ENCODE measurements at regions of chr12 and their contacts with region 1.

Region 1: GRCh38 chr12:85866986-85867776 is 6.9 kb upstream of the NTS start:
- DNase-seq: peak; percentile 81
- H3K4me3 ChIP-seq: no peak overlapping the region
- H3K27ac ChIP-seq: no peak overlapping the region
- H3K4me1 ChIP-seq: no peaks in the 10 kb centered on the region
- H3K27me3 ChIP-seq: no peaks in the 10 kb centered on the region
- CTCF ChIP-seq: peak; percentile 57 to 60
- POLR2A ChIP-seq: no peak

Region 2: DNA sequence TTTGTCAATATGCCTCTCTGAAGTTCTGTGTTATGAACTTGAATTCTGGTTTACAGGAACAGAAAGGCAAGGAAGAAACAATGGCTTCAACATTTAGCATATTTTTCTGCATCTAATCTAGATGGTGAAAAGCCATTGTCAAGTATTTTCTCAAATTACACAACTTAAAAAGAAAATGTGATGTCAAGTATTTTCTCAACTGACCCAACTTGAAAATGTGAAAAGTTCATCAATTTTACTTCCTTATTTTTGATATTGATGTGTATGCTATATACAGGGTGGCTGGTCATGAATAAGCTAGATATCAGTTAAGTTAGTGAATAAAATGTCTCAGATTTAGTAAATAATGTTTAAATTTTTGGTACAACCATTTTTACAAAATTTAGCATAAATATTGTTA is 390.4 kb before region 1 on chr12:
- CTCF ChIA-PET with region 1: interaction called, 57 read pairs
- POLR2A ChIA-PET with region 1: no interaction called
- dilution Hi-C with region 1: no loop called
- intact Hi-C with region 1: loop called (anchors 1 kb)
- DNase-seq: no peak
- H3K4me3 ChIP-seq: no peak overlapping the region
- H3K27ac ChIP-seq: no peak overlapping the region
- H3K4me1 ChIP-seq: no peaks in the 10 kb centered on the region
- H3K27me3 ChIP-seq: no peaks in the 10 kb centered on the region
- CTCF ChIP-seq: no peak
- POLR2A ChIP-seq: no peak

Region 3: DNA sequence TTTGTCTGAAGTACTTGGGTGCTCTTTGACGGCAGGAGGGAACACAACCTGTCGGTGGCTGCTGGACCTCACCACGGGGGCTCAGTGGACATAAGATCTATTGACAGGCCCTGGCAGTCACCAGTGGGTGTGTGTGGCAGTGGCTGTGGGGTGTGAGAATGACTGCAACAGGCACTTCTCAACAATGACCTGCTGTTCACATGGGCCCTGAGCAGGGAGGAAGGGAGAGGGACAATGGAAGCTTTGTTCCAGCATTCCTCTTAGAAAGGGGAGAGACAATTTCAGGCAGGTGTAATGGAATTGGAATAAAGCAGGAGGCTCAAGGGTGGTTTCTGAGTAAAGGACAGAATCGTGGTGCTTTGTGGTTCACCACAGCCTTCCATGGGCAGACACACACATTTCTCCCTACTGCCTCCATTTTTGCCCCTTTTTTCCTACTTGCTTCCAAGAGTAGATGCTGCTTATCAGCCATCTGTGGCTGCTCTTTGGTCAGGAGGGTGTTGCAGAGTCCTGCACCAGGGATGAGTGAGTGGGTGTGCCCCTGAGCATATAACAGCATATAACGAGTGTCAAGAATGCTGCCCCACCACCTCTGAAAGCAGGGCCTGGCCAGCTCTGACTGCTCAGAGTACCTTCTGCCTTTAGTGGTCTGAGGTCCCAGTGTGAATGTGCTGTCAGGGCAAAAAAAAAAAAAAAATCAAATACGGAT is 298.6 kb before region 1 on chr12:
- CTCF ChIA-PET with region 1: interaction called, 26 read pairs
- POLR2A ChIA-PET with region 1: no interaction called
- dilution Hi-C with region 1: no loop called
- intact Hi-C with region 1: no loop called
- DNase-seq: no peak
- H3K4me3 ChIP-seq: no peak overlapping the region
- H3K27ac ChIP-seq: no peak overlapping the region
- H3K4me1 ChIP-seq: no peaks in the 10 kb centered on the region
- H3K27me3 ChIP-seq: no peaks in the 10 kb centered on the region
- CTCF ChIP-seq: no peak
- POLR2A ChIP-seq: no peak

Region 4: DNA sequence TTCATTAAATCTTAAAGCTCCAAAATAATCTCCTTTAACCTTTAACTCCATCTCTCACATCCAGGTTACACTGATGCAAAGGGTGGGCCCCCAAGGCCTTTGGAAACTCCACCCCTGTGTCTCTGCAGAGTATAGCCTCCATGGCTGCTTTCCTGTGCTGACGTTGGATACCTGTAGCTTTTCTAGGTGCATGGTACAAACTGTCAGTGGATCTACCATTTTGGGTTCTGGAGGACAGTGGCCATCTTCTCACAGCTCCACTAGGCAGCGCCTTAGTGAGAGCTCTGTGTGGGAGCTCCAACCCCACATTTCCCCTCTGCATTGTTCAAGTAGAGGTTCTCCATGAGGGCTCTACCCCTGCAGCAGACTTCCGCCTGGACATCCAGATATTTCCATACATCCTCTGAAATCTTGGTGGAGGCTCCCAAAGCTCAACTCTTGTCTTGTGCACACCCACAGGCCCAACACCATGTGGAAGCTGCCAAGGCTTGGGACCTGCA is 193.2 kb before region 1 on chr12:
- CTCF ChIA-PET with region 1: no interaction called
- POLR2A ChIA-PET with region 1: no interaction called
- dilution Hi-C with region 1: no loop called
- intact Hi-C with region 1: no loop called
- DNase-seq: no peak
- H3K4me3 ChIP-seq: no peak overlapping the region
- H3K27ac ChIP-seq: no peak overlapping the region
- H3K4me1 ChIP-seq: no peaks in the 10 kb centered on the region
- H3K27me3 ChIP-seq: no peaks in the 10 kb centered on the region
- CTCF ChIP-seq: no peak
- POLR2A ChIP-seq: no peak

Region 5: GRCh38 chr12:85733221-85733840 is 133.8 kb before region 1 on chr12:
- CTCF ChIA-PET with region 1: interaction called, 10 read pairs
- POLR2A ChIA-PET with region 1: no interaction called
- dilution Hi-C with region 1: no loop called
- intact Hi-C with region 1: no loop called
- DNase-seq: peak; percentile 84
- H3K4me3 ChIP-seq: no peak overlapping the region
- H3K27ac ChIP-seq: no peak overlapping the region
- H3K4me1 ChIP-seq: no peaks in the 10 kb centered on the region
- H3K27me3 ChIP-seq: no peaks in the 10 kb centered on the region
- CTCF ChIP-seq: no peak
- POLR2A ChIP-seq: no peak

Region 6: DNA sequence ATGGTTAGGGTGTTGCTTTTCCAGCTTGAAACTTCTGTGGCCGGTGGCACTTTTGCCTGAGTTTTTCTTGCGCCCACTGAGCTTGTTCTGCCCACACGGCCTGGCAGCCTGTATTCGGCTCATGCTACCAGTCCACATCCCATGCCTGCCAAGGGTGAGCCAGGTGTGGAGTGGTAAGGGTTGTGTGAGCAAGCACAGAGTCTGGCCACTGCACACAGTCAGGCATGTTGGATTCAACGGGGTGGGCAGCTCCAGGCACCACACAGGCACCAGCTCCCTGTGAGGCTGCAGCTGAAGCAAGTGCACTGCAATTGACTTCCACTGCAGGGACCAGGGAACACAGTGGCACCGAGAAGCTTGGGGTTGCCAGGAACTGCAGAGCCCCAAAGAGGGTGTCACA is 11.9 kb before region 1 on chr12:
- CTCF ChIA-PET with region 1: interaction called, 31 read pairs
- POLR2A ChIA-PET with region 1: no interaction called
- dilution Hi-C with region 1: no loop called
- intact Hi-C with region 1: no loop called
- DNase-seq: no peak
- H3K4me3 ChIP-seq: no peak overlapping the region
- H3K27ac ChIP-seq: no peak overlapping the region
- H3K4me1 ChIP-seq: no peaks in the 10 kb centered on the region
- H3K27me3 ChIP-seq: no peaks in the 10 kb centered on the region
- CTCF ChIP-seq: no peak
- POLR2A ChIP-seq: no peak

Region 7: DNA sequence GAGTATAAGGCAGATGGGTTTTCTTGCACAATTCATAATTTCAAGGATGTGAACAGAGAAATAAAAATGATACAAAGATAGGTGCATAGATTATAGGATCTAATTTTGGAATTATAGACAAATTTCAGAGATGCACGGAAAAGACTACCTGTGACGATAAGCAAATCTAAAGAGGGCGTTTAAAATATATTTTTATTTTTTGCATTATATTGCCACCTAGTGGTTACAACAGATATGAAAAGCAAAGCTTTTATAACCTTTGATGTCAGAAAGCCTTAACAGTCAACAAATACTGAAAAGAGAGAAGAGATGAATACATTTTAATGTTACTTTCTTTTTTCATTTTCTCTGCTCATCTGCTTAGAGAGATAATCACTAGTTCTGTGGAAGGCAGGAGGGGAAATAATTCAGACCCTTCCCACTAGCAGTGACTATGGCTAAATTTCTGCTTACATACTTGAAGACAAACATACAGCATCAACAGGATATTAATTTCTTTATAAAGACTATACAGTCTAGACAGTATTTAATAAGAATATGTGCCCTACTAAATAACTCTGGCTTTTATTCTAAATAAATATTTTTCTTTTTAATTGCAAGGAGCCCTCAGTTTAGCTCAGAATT is 53.3 kb after region 1 on chr12:
- CTCF ChIA-PET with region 1: interaction called, 26 read pairs
- POLR2A ChIA-PET with region 1: no interaction called
- dilution Hi-C with region 1: no loop called
- intact Hi-C with region 1: loop called (anchors 1 kb)
- DNase-seq: peak; percentile 53
- H3K4me3 ChIP-seq: no peak overlapping the region
- H3K27ac ChIP-seq: no peak overlapping the region
- H3K4me1 ChIP-seq: no peaks in the 10 kb centered on the region
- H3K27me3 ChIP-seq: no peaks in the 10 kb centered on the region
- CTCF ChIP-seq: peak; percentile 20 to 27
- POLR2A ChIP-seq: no peak